Right ventricle myocardium inferior (tissue), 1 donor: ENCODE measurements at regions of chr22 and their contacts with region 1.

Region 1: GRCh38 chr22:32579509-32580234 is 105.1 kb downstream of the FBXO7 start:
- DNase-seq: no peak
- ATAC-seq: peak; percentile 46

Region 2: DNA sequence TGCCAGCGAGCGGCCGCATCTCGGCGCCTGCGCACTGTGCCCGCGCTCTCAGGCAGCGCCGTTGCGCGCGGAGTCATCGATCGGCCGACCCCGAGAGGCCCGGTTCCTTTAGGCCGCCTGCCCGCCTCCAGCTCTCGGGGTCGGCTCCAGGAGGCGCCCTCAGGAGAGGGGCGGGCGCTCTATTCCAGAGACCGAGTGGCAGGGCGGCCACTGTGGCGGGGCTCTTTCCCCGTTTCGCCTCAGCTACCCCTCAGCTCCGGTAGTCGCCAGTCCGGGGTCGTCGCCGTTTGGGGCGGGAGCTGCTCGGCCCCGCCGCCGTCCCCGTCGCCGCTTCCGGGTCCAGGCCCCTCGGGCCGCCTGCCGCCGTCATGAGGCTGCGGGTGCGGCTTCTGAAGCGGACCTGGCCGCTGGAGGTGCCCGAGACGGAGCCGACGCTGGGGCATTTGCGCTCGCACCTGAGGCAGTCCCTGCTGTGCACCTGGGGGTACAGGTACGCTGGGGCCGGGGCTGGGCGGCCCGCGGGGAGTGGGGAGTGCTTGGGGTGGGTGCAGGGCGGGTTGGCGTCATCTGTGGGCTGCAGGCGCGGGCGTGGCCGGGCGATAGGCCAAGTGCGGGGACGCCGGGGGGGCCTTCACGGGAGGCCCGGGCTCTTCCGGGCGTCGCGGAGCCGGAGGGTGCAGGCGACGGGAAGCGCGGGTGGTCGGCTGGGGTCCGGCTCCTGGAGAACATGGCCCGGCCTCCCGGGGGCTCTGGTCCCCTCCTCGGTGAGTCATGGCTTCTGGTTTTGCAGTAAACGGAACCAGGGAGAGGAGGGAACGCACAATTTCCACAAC is 104.8 kb before region 1 on chr22 and contains the start of gene FBXO7:
- intact Hi-C with region 1: no loop called
- DNase-seq: peak; percentile 97
- ATAC-seq: peak; percentile 92
- total RNA-seq, gene FBXO7: 35.8 TPM

Region 3: GRCh38 chr22:32619614-32620426 is 40.1 kb after region 1 on chr22:
- intact Hi-C with region 1: loop called (anchors 2 kb)
- DNase-seq: no peak
- ATAC-seq: peak; percentile 59